Vagina (tissue), 2 donors: ENCODE measurements at regions of chr14 and their contacts with region 1.

Region 1: GRCh38 chr14:100979780-100980179 is 76.3 kb upstream of the RTL1 start:
- DNase-seq: no peak
- H3K4me3 ChIP-seq: no peak overlapping the region
- H3K27ac ChIP-seq: no peak overlapping the region
- H3K4me1 ChIP-seq: no peaks in the 10 kb centered on the region
- H3K27me3 ChIP-seq: no peaks in the 10 kb centered on the region
- CTCF ChIP-seq: no peak
- POLR2A ChIP-seq: no peak

Region 2: GRCh38 chr14:99213101-99213500 is 1766.7 kb before region 1 on chr14:
- intact Hi-C with region 1: no loop called
- DNase-seq: no peak
- H3K4me3 ChIP-seq: no peak overlapping the region
- H3K27ac ChIP-seq: no peak overlapping the region
- H3K4me1 ChIP-seq: peaks cover 38% of the 10 kb centered on the region
- H3K27me3 ChIP-seq: no peaks in the 10 kb centered on the region
- CTCF ChIP-seq: no peak
- POLR2A ChIP-seq: no peak

Region 3: DNA sequence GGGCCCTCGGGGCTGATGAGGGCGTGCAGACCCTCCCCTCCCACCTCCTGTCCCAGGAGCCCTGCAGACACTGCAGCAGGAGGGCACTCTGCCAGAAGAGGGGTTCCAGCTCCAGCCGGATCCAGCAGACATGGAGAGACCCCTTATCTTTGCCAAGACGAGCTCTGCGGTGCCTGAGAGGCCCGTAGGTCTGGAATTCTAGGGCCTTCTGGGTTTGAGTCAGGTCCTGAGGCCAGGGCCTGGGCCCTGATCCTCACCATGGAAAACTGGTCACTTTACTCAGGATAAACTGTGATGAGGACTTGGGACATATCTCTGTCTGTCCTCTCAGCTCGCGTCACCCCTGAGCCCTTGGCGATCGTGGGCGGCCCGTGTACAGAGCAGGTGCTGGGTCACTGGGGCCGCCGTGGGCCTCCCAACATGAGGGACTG is 140.1 kb before region 1 on chr14:
- intact Hi-C with region 1: no loop called
- DNase-seq: no peak
- H3K4me3 ChIP-seq: no peak overlapping the region
- H3K27ac ChIP-seq: peak overlapping the region; percentile 79
- H3K4me1 ChIP-seq: peaks cover 24% of the 10 kb centered on the region
- H3K27me3 ChIP-seq: no peaks in the 10 kb centered on the region
- CTCF ChIP-seq: no peak
- POLR2A ChIP-seq: no peak

Region 4: GRCh38 chr14:101937926-101938767 is 958.4 kb after region 1 on chr14:
- intact Hi-C with region 1: loop called (anchors 5 kb)
- DNase-seq: no peak
- H3K4me3 ChIP-seq: no peak overlapping the region
- H3K27ac ChIP-seq: no peak overlapping the region
- H3K4me1 ChIP-seq: no peaks in the 10 kb centered on the region
- H3K27me3 ChIP-seq: no peaks in the 10 kb centered on the region
- CTCF ChIP-seq: no peak
- POLR2A ChIP-seq: no peak